H1 (cell line): ENCODE measurements at regions of chr2 and their contacts with region 1.

Region 1: DNA sequence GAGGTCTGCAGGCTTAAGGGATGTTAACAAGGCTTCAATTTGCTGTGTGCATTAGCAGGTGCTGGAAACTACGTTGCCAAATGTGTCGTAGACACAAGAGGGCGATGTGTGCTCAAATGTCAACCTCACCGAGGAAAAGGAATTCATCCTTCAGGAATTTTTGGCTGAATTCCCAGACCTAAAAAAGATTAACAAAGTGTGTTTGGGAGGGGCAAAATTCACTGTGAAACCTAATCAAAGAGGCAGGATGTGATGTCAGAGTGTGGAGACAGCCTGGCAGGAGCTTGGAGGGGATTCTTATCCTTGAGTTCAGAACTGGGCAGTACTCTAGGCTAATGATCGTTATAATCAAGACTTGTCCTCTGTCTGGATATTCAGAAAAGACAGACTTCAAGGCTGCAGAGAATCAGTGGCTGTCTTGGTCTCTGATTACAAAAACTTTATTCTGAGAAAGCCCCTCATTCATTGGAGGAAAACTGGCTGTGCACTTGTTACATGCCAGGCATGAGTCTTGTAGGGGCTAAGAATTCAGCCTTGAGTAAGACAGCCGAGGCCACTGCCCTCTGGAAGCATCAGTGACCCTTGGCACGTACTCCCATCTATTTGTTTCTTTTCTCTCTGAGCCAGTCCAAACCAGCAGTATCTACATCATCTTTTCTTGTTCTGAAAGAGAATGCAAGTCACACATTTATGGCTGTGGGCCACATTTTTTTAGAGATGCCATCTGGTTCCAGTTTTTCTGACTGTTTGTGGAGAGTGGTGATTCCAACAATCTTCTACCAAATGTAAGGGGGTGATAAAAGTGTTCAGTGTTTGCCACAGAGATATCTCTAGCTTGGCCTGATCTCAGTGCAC is 18.7 kb upstream of the SCYGR1 start:
- DNase-seq: peak; percentile 51 to 53
- H3K4me3 ChIP-seq: no peak overlapping the region
- H3K27ac ChIP-seq: no peak overlapping the region
- H3K4me1 ChIP-seq: no peaks in the 10 kb centered on the region
- H3K27me3 ChIP-seq: no peaks in the 10 kb centered on the region
- CTCF ChIP-seq: peak; percentile 50 to 86 (median 77)
- EP300 ChIP-seq: no peak
- POLR2A ChIP-seq: no peak; a peak in 1 of 3 replicates
- RAD21 ChIP-seq: peak; percentile 92 to 94

Region 2: GRCh38 chr2:227317834-227318233 is 88.6 kb before region 1 on chr2:
- CTCF ChIA-PET with region 1: no interaction called
- POLR2A ChIA-PET with region 1: no interaction called
- DNase-seq: no peak
- H3K4me3 ChIP-seq: no peak overlapping the region
- H3K27ac ChIP-seq: no peak overlapping the region
- H3K4me1 ChIP-seq: no peaks in the 10 kb centered on the region
- H3K27me3 ChIP-seq: no peaks in the 10 kb centered on the region
- CTCF ChIP-seq: no peak
- EP300 ChIP-seq: no peak
- POLR2A ChIP-seq: no peak
- RAD21 ChIP-seq: no peak

Region 3: DNA sequence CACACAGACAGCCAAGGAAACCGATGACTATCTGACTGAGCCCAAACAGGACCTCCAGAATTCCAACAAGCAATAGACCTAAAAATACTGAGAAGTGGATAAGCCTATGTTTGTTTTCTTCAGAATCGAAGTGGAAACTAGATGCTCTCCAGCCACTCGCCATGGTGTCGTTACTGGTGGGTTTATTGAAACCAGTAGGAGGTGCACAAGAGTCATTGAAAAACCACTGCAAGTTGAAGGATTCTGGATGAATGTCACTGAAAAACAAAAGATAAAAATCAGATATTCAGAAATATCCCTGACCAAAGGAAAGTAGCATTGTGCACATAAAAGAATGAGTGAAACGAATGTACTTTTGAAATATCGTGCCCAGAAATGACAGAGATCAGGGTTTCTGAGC is 42.6 kb before region 1 on chr2:
- CTCF ChIA-PET with region 1: interaction called, 10 read pairs
- POLR2A ChIA-PET with region 1: no interaction called
- DNase-seq: no peak
- H3K4me3 ChIP-seq: no peak overlapping the region
- H3K27ac ChIP-seq: no peak overlapping the region
- H3K4me1 ChIP-seq: no peaks in the 10 kb centered on the region
- H3K27me3 ChIP-seq: no peaks in the 10 kb centered on the region
- CTCF ChIP-seq: peak; percentile 2 to 54 (median 35)
- EP300 ChIP-seq: no peak
- POLR2A ChIP-seq: no peak
- RAD21 ChIP-seq: peak; percentile 60 to 62

Region 4: DNA sequence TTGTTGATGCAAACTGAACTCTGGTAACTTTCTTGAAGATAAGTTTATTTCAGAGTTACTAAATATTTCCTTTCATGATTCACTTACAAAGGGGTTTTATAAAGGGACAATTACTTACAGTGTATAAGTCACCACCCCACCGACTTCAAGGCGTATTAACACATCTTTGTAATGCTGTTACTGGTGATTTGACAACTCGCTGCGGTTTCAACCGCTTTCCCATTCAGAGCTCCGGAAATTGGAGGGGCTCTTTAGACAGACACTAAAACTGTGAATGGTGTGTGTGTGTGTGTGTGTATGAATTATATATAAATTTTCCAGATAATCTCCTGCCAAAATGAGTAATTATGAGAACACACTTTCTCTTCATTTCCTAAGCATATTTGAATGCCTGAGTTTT is 32.2 kb before region 1 on chr2:
- CTCF ChIA-PET with region 1: interaction called, 24 read pairs
- POLR2A ChIA-PET with region 1: no interaction called
- DNase-seq: no peak
- H3K4me3 ChIP-seq: no peak overlapping the region
- H3K27ac ChIP-seq: no peak overlapping the region
- H3K4me1 ChIP-seq: peaks cover 0 to 6% (median 0%) of the 10 kb centered on the region in 4 experiments; a peak in 1 of 7 replicates
- H3K27me3 ChIP-seq: peaks cover 0 to 2% (median 0%) of the 10 kb centered on the region in 4 experiments; a peak in 1 of 7 replicates
- CTCF ChIP-seq: no peak
- EP300 ChIP-seq: no peak
- POLR2A ChIP-seq: no peak
- RAD21 ChIP-seq: no peak